Activated CD4-positive, alpha-beta memory T cell treated with anti-CD3 and anti-CD28 coated beads, Interleukin-2, amount 10 ng/mL, durations not matched to agents 7 days and 5 days (primary cell): ENCODE measurements at regions of chr1 and their contacts with region 1.

Region 1: DNA sequence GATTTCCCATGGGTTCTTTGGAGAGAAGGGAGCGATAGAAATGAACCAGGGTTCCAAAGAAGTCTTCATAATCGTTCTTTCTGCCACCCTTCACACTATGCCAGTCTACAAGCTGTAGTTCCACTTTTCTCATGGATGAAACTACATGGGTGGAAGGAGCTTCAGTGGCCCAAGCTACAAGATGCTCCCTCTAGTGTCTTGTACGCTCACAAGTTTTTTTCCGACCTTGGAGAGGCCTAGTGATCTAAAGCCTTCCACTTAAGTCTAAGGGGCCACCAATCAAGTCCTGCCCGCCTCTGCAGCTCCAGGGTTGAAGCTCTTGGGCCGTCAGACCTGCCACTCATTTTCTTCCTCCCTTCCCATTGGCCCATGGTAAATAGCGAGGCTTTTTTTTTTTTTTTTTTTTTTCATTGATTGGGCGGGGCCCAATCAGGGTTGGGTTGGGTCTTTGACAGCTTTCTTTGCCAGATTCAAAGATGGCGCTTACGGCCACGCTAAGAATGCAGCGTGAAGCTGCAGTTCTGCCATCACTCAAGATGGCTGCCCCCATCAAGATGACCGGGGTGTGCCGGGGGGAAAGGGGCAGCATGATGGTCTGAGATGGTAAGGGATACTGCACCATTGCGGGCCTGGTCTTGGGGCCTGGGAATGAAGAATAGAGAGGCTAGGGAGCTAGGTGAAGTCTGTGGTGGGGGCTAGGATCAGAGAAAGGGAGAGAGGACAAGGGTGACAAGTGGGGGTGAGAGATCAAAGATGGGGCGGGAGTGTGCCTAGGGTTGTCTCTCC is at the start of gene TOMM40L:
- DNase-seq: peak; percentile 90
- H3K4me3 Mint-ChIP-seq: peak within 1 kb of the TSS; percentile 100
- H3K27ac Mint-ChIP-seq: peak within 1 kb of the TSS; percentile 94
- H3K4me1 Mint-ChIP-seq: peaks cover 45% of the 10 kb centered on the region
- H3K27me3 Mint-ChIP-seq: no peaks in the 10 kb centered on the region
- total RNA-seq, gene TOMM40L: 17.4 to 18.1 TPM

Region 2: DNA sequence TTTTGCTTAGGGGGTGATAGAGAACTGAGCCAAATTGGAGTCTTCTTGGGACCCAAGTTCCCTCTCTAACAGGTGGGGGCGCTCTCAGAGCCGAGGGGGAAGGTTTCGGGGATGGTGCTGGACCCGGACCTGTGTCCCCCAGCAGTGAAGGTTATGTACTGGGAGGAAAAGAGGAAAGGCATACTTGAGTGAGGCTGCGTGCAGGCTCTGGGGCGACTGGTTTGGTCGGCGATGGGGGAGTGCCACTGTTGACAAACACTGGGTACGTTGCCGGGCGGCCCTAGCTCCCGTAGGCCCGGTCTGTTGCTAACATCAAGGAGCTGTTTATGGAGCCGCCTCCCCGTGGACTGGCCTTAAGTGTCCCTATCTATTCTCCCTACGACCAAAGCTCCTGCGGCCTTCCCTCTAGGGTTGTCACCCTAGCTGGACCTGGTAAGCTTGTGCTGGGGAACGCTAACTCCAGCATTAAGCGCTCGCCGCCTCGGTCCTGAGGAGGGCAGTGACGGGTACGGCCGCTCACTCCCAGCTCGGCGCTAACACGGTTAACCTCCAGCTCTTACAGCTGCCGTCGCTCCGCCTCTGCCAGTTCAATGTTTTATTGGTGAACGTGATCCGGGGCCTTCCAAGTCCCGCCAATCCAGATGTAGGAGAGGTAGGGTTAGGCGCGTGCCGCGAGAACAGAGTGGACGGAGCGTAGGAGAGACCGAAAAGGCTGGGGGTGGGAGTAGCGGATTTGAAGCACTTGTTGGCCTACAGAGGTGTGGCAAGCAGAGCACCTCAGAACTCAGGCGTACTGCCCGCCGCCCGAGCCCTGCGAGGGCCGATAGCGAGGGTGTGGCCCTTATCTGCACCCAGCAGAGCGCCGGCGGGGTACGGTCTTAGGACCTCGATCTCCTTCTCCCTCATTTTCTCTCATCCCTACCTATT is 59.7 kb before region 1 on chr1 and contains the start of gene PPOX:
- CTCF ChIA-PET with region 1: interaction called, 57 read pairs
- POLR2A ChIA-PET with region 1: interaction called, 13 read pairs
- DNase-seq: peak; percentile 96
- H3K4me3 Mint-ChIP-seq: peak within 1 kb of the TSS; percentile 88
- H3K27ac Mint-ChIP-seq: peak within 1 kb of the TSS; percentile 94
- H3K4me1 Mint-ChIP-seq: peaks cover 49% of the 10 kb centered on the region
- H3K27me3 Mint-ChIP-seq: no peaks in the 10 kb centered on the region
- total RNA-seq, gene PPOX: 32.9 to 33.2 TPM

Region 3: GRCh38 chr1:161192476-161193465 is 33.0 kb before region 1 on chr1:
- CTCF ChIA-PET with region 1: interaction called, 69 read pairs
- POLR2A ChIA-PET with region 1: interaction called, 10 read pairs
- DNase-seq: peak; percentile 77
- H3K4me3 Mint-ChIP-seq: no peak overlapping the region
- H3K27ac Mint-ChIP-seq: peak overlapping the region; percentile 56
- H3K4me1 Mint-ChIP-seq: peaks cover 53% of the 10 kb centered on the region
- H3K27me3 Mint-ChIP-seq: no peaks in the 10 kb centered on the region

Region 4: GRCh38 chr1:161209790-161210409 is 15.8 kb before region 1 on chr1:
- CTCF ChIA-PET with region 1: interaction called, 101 read pairs
- POLR2A ChIA-PET with region 1: interaction called, 7 read pairs
- DNase-seq: peak; percentile 75
- H3K4me3 Mint-ChIP-seq: no peak overlapping the region
- H3K27ac Mint-ChIP-seq: peak overlapping the region; percentile 41
- H3K4me1 Mint-ChIP-seq: peaks cover 39% of the 10 kb centered on the region
- H3K27me3 Mint-ChIP-seq: no peaks in the 10 kb centered on the region

Region 5: DNA sequence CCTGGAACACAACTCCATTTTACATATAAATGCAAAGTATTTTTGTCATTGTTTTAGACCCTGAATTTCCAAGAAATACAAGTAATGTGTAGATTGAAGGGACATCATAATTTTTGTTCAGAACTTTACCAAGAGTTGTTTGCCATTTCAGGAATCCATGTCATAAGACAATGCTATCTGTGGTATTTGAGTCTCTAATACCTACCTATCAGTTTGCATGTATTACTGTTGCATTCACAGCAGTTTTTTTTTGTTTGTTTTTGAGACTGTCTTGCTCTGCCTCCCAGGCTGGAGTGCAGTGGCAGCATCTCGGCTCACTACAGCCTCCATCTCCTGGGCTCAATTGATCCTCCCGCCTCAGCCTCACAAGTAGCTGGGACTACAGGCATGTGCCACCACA is 66.9 kb after region 1 on chr1:
- CTCF ChIA-PET with region 1: interaction called, 70 read pairs
- POLR2A ChIA-PET with region 1: interaction called, 3 read pairs
- DNase-seq: no peak
- H3K4me3 Mint-ChIP-seq: no peak overlapping the region
- H3K27ac Mint-ChIP-seq: no peak overlapping the region
- H3K4me1 Mint-ChIP-seq: peaks cover 2% of the 10 kb centered on the region
- H3K27me3 Mint-ChIP-seq: no peaks in the 10 kb centered on the region

Region 6: GRCh38 chr1:161314201-161314981 is 88.7 kb after region 1 on chr1 and contains the start of gene SDHC:
- CTCF ChIA-PET with region 1: interaction called, 17 read pairs
- POLR2A ChIA-PET with region 1: interaction called, 12 read pairs
- DNase-seq: peak; percentile 91
- H3K4me3 Mint-ChIP-seq: peak within 1 kb of the TSS; percentile 93
- H3K27ac Mint-ChIP-seq: peak within 1 kb of the TSS; percentile 95
- H3K4me1 Mint-ChIP-seq: peaks cover 20% of the 10 kb centered on the region
- H3K27me3 Mint-ChIP-seq: peaks cover 3% of the 10 kb centered on the region
- total RNA-seq, gene SDHC: 172 to 173 TPM

Region 7: GRCh38 chr1:161374373-161374772 is 148.6 kb after region 1 on chr1:
- CTCF ChIA-PET with region 1: interaction called, 193 read pairs
- POLR2A ChIA-PET with region 1: no interaction called
- DNase-seq: no peak
- H3K4me3 Mint-ChIP-seq: no peak overlapping the region
- H3K27ac Mint-ChIP-seq: no peak overlapping the region
- H3K4me1 Mint-ChIP-seq: peaks cover 8% of the 10 kb centered on the region
- H3K27me3 Mint-ChIP-seq: no peaks in the 10 kb centered on the region